ENCODE measurements at regions of chr4 and their contacts with region 1.

Region 1: DNA sequence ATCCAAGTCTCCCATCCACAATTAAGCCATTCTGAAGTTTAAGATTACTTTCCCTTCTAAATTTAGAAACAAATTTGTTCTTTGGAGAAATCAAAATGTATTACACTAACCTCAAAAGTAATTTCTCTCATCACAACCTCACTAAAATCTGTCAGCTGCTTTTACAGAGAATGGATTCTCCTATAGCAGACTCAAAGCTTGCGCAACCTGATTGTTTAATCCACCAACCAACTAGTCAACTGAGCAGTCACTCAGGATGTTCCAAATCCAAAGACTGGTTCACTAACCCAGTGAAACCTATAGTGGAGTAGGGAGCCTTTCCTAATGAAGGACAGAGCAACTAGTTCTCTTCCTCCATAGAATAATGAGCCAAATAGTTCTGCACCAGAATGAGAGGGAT is 44.3 kb downstream of the RCHY1 start:
- DNase-seq: no peak
- ATAC-seq: no peak
- H3K4me3 ChIP-seq: no peak overlapping the region
- H3K27ac ChIP-seq: no peak overlapping the region
- H3K4me1 ChIP-seq: no peaks in the 10 kb centered on the region
- H3K27me3 ChIP-seq: no peaks in the 10 kb centered on the region
- CTCF ChIP-seq: no peak

Region 2: GRCh38 chr4:73967866-73968265 is 1502.0 kb before region 1 on chr4:
- CTCF ChIA-PET with region 1: interaction called, 10 read pairs
- POLR2A ChIA-PET with region 1: no interaction called
- intact Hi-C with region 1: no loop called
- DNase-seq: no peak
- ATAC-seq: no peak
- H3K4me3 ChIP-seq: no peak overlapping the region
- H3K27ac ChIP-seq: no peak overlapping the region
- H3K4me1 ChIP-seq: no peaks in the 10 kb centered on the region
- H3K27me3 ChIP-seq: no peaks in the 10 kb centered on the region
- CTCF ChIP-seq: no peak

Region 3: DNA sequence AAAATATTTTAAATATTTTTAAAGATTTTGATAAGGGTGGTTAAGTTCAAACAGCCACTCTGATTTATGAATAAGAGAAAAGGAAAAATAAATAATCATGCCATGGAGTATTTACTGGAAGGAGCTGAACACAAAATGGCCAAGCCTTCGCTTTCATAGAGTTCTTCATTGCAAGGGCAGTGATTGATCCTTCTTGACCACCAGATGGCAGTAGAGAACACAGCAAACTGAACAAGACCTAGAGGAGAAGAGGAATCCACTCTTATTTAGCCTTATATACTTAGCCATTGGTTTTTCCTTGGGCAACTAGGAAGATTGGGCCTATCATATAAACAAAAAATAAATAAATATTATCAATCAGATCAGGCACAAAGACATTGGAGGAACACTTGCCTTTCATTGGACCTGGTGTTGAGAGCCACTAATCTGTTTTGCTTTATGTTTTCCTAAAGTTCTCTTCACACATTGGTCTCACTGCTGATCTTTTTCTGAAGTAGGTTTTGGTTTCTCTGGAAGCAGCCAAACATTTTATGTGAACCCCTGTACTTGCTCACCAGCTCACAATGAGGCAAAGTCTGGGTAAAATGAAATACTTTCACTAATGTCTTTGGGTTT is 595.0 kb before region 1 on chr4:
- CTCF ChIA-PET with region 1: no interaction called
- POLR2A ChIA-PET with region 1: no interaction called
- intact Hi-C with region 1: loop called (anchors 2 kb)
- DNase-seq: peak; percentile 80
- ATAC-seq: peak; percentile 83
- H3K4me3 ChIP-seq: no peak overlapping the region
- H3K27ac ChIP-seq: no peak overlapping the region
- H3K4me1 ChIP-seq: no peaks in the 10 kb centered on the region
- H3K27me3 ChIP-seq: no peaks in the 10 kb centered on the region
- CTCF ChIP-seq: peak; percentile 81